Calu3 (cell line): ENCODE measurements at regions of chr7 and their contacts with region 1.

Region 1: DNA sequence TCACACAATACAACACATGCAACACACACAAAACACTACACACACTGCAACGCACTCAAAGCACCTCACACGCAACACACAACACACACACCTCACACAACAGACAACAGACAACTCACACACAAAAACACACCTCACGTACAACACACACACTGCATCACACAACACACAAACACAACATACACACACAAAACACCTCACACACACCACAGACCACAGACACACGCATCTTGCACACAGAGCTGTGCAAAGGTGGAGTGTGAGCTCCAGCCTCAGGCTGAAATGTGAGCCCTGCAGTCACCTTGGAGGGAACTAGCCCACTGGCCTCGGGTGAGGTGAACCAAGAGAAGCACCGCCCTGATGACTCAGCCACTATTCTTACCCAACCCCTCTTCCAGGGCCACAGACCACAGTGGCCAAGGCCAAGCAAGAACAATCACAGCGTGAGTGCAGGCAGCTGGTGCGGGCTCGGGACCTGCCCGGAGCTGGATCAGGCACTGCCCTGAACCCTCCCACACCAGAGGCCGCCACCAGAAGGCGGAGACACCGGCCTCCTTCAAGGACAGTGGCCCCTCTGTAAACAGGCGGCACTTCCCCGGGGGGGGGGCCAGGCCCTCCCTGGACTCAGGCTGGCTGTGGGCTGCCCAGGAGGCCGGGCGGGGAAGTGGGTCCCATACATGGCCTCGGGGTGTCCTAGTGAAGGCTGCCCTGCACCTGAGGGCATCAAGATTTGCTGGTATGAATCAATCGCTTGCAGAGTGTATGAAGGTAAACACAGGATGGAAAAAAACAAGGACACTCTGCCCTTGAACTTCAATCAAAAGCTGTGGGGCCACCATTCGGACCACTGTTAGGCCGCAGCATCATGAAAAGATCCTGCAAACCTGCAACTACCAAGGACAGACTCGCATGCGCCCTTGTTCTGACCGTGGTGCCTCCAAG is 106.7 kb downstream of the TNS3 start:
- DNase-seq: peak; percentile 97
- H3K4me3 Mint-ChIP-seq: no peak overlapping the region
- H3K27ac Mint-ChIP-seq: no peak overlapping the region
- H3K4me1 Mint-ChIP-seq: peaks cover 39% of the 10 kb centered on the region
- H3K27me3 Mint-ChIP-seq: no peaks in the 10 kb centered on the region
- CTCF ChIP-seq: no peak

Region 2: DNA sequence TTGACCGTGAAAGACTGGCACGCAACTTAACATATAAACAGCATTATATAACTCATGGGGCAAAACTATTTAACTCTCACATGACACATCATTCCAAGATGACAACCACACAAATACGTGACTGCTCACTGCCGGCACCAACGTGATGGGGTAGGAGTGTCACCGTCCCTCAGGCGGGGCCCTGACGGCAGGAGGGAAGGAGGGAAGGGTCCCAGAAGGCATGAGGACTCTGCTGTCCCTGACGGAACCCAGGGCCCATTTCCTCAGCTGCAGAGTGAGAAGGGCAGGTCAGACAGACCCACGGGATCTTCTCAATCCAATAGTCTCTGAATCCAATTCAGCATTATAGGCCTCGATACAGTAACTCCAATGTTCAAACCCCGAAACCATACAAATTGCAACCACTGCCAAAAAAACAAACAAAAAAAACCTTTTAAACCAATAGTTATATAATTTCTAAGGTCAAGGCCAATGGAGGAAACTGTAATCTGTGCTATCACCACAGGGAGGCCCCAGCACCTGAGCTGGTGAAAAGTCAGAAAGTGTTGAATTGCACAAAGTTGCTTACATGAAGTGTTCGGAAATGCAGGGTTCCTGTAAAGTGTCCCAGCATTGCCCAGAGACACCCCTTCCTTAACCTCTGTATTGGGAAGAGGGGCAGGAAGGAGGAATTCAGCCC is 30.7 kb before region 1 on chr7:
- CTCF ChIA-PET with region 1: interaction called, 4 read pairs
- intact Hi-C with region 1: loop called (anchors 2 kb)
- DNase-seq: peak; percentile 30
- H3K4me3 Mint-ChIP-seq: no peak overlapping the region
- H3K27ac Mint-ChIP-seq: no peak overlapping the region
- H3K4me1 Mint-ChIP-seq: peaks cover 45% of the 10 kb centered on the region
- H3K27me3 Mint-ChIP-seq: no peaks in the 10 kb centered on the region
- CTCF ChIP-seq: peak; percentile 42

Region 3: DNA sequence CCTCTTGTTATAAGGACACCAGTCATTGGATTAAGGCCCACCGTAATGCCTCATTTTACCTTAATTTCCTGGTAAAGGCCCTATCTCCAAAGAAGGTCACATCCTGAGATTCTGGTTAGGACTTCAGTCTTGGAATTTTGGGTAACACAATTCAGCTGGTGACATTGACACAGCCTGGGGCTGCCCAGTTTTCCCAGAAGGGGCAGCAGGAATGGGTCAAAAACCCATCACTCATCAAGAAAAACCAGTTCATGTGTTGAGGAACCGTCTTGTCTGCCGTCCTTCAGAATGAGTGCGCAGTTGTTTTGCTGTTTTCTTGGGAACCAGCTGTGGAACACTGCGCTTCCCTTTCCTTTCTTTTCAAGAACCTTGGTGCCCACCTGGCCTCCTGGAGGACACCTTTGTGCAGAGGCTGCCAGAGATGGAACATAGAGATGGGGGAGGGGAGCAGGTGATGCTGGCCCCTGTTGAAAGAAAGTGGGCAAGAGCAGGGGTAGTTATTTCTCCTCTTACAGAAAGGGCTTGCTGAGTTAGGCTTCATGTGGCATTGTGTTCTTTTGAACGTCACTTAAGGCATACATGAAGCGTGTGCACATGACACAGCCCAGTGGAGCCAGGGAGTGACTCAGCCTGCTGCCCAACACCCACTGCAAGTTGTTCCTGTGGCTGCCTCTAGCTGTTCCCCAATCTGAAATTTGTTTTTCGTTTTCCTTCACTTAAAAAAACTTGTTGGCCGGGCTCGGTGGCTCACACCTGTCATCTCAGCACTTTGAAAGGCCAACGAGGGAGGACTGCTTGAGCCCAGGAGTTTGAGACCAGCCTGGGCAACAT is 194.1 kb after region 1 on chr7:
- CTCF ChIA-PET with region 1: no interaction called
- intact Hi-C with region 1: loop called (anchors 10 kb)
- DNase-seq: peak; percentile 85
- H3K4me3 Mint-ChIP-seq: no peak overlapping the region
- H3K27ac Mint-ChIP-seq: peak overlapping the region; percentile 50
- H3K4me1 Mint-ChIP-seq: peaks cover 37% of the 10 kb centered on the region
- H3K27me3 Mint-ChIP-seq: no peaks in the 10 kb centered on the region
- CTCF ChIP-seq: no peak